ENCODE measurements at regions of chr22 and their contacts with region 1.

Region 1: GRCh38 chr22:30606455-30607299 is at the start of gene TCN2:
- DNase-seq: peak; percentile 70
- ATAC-seq: peak; percentile 70
- H3K4me3 Mint-ChIP-seq: peak within 1 kb of the TSS; percentile 58
- H3K27ac Mint-ChIP-seq: no peak within 1 kb of the TSS
- H3K4me1 Mint-ChIP-seq: peaks cover 37% of the 10 kb centered on the region
- H3K27me3 Mint-ChIP-seq: no peaks in the 10 kb centered on the region
- total RNA-seq, gene TCN2: 0.19 to 0.41 TPM

Region 2: DNA sequence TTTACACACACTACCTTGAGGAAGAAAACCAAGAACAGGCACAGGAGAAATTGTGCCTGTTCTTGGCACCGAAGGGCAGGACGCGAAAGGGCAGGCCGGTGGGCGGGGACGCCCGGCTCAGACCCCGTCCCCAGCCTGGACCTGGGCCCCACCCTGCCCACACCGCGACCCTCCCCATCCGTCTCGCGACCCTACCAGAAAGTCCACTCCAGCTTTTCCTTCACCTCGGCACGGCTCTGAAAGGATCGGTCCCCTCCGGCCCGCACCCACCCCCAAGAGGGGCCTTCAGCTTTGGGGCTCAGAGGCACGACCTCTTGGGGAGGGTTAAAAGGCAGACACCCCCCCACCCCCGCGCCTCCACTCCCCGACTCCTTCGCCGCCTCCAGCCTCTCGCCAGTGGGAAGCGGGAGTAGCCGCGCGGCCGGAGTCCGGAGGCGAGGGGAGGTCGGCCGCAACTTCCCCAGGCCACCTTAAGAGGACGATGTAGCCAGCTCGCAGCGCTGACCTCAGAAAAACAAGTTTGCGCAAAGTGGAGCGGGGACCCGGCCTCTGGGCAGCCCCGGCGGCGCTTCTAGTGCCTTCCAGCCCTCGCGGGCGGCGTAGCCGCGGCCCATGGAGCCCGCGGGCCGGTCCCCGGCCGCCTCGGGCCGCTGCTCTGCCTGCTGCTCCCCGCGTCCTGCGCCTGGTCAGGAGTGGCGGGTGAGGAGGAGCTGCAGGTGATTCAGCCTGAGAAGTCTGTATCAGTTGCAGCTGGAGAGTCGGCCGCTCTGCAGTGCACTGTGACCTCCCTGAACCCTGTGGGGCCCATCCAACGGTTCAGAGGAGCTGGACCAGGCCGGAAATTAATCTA is 64.5 kb before region 1 on chr22:
- CTCF ChIA-PET with region 1: no interaction called
- DNase-seq: no peak
- ATAC-seq: no peak
- H3K4me3 Mint-ChIP-seq: no peak overlapping the region
- H3K27ac Mint-ChIP-seq: no peak overlapping the region
- H3K4me1 Mint-ChIP-seq: no peaks in the 10 kb centered on the region
- H3K27me3 Mint-ChIP-seq: peaks cover 43% of the 10 kb centered on the region

Region 3: GRCh38 chr22:30591588-30592359 is 14.9 kb before region 1 on chr22 and contains the start of gene PES1:
- CTCF ChIA-PET with region 1: interaction called, 13 read pairs
- DNase-seq: peak; percentile 97
- ATAC-seq: peak; percentile 98
- H3K4me3 Mint-ChIP-seq: no peak within 1 kb of the TSS
- H3K27ac Mint-ChIP-seq: no peak within 1 kb of the TSS
- H3K4me1 Mint-ChIP-seq: peaks cover 1% of the 10 kb centered on the region
- H3K27me3 Mint-ChIP-seq: peaks cover 13% of the 10 kb centered on the region
- total RNA-seq, gene PES1: 56.2 to 91.5 TPM